ENCODE measurements at regions of chr10 and their contacts with region 1.

Region 1: GRCh38 chr10:96229568-96230030 is 41.8 kb downstream of the BLNK start:
- DNase-seq: peak; percentile 82
- H3K4me3 ChIP-seq: no peak overlapping the region
- H3K27ac ChIP-seq: no peak overlapping the region
- H3K4me1 ChIP-seq: no peaks in the 10 kb centered on the region
- H3K27me3 ChIP-seq: no peaks in the 10 kb centered on the region
- CTCF ChIP-seq: peak; percentile 98

Region 2: GRCh38 chr10:96034625-96035024 is 195.0 kb before region 1 on chr10:
- CTCF ChIA-PET with region 1: no interaction called
- POLR2A ChIA-PET with region 1: no interaction called
- intact Hi-C with region 1: no loop called
- DNase-seq: no peak
- H3K4me3 ChIP-seq: no peak overlapping the region
- H3K27ac ChIP-seq: no peak overlapping the region
- H3K4me1 ChIP-seq: no peaks in the 10 kb centered on the region
- H3K27me3 ChIP-seq: peaks cover 9% of the 10 kb centered on the region
- CTCF ChIP-seq: no peak

Region 3: GRCh38 chr10:96118604-96119450 is 110.8 kb before region 1 on chr10:
- CTCF ChIA-PET with region 1: no interaction called
- POLR2A ChIA-PET with region 1: no interaction called
- intact Hi-C with region 1: no loop called
- DNase-seq: no peak
- H3K4me3 ChIP-seq: no peak overlapping the region
- H3K27ac ChIP-seq: no peak overlapping the region
- H3K4me1 ChIP-seq: no peaks in the 10 kb centered on the region
- H3K27me3 ChIP-seq: peaks cover 25% of the 10 kb centered on the region
- CTCF ChIP-seq: no peak

Region 4: GRCh38 chr10:96257944-96258343 is 28.3 kb after region 1 on chr10:
- CTCF ChIA-PET with region 1: interaction called, 10 read pairs
- POLR2A ChIA-PET with region 1: no interaction called
- intact Hi-C with region 1: no loop called
- DNase-seq: no peak
- H3K4me3 ChIP-seq: no peak overlapping the region
- H3K27ac ChIP-seq: no peak overlapping the region
- H3K4me1 ChIP-seq: no peaks in the 10 kb centered on the region
- H3K27me3 ChIP-seq: no peaks in the 10 kb centered on the region
- CTCF ChIP-seq: no peak

Region 5: DNA sequence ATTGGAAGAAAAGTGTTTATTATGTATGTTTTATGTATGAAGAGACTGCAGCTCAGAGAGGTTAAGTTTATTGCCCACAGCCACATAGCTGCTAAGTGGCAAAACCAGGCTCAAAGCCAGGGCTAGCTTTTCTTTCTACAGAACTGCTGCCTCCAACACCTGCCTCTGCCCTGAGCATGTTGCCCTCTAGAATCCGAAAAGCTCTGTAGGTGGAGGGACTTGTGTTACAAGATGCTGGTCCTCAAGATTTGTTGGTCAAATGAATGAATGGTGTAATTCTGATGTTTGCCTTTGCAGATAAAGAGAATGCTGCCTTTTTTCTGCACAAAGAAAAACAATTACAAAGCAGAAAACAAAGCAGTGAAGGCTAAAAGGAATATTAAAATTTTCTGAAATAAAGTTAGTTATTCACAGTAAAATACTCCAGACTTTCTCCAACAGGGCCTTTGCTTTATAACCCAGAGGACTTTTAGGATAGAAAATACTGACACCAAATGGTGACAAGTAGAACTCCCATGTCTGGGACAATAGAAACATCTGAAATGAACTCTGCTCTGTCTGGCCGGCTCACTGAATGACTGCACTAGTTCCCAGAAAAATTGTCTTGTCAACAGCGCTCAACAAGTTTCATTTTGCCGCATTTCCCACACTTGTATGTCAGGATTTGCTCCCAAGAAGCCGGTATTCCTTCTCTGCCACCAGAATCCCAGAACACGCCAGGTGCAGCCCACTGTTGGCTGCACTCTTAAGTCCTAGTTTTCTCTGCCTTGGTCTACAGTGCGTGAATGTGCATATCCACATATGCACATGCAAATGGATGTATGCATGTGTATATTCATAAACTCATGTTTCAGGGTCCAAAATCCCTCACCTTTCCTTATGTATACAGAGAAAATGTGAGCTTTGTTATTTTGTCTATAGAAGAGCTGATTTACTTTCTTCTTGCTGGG is 63.6 kb after region 1 on chr10:
- CTCF ChIA-PET with region 1: interaction called, 12 read pairs
- POLR2A ChIA-PET with region 1: no interaction called
- intact Hi-C with region 1: loop called (anchors 1 kb)
- DNase-seq: peak; percentile 48
- H3K4me3 ChIP-seq: no peak overlapping the region
- H3K27ac ChIP-seq: no peak overlapping the region
- H3K4me1 ChIP-seq: no peaks in the 10 kb centered on the region
- H3K27me3 ChIP-seq: peaks cover 46% of the 10 kb centered on the region
- CTCF ChIP-seq: peak; percentile 65